ENCODE measurements at regions of chr21 and their contacts with region 1.

Region 1: GRCh38 chr21:25550352-25551120 is 56.7 kb downstream of the MRPL39 start:
- H3K4me3 Mint-ChIP-seq: no peak overlapping the region
- H3K27ac Mint-ChIP-seq: no peak overlapping the region
- H3K4me1 Mint-ChIP-seq: peaks cover 23% of the 10 kb centered on the region
- H3K27me3 Mint-ChIP-seq: no peaks in the 10 kb centered on the region

Region 2: GRCh38 chr21:25133939-25134338 is 416.6 kb before region 1 on chr21:
- intact Hi-C with region 1: no loop called
- H3K4me3 Mint-ChIP-seq: no peak overlapping the region
- H3K27ac Mint-ChIP-seq: no peak overlapping the region
- H3K4me1 Mint-ChIP-seq: no peaks in the 10 kb centered on the region
- H3K27me3 Mint-ChIP-seq: no peaks in the 10 kb centered on the region

Region 3: GRCh38 chr21:25501996-25502665 is 48.4 kb before region 1 on chr21:
- intact Hi-C with region 1: loop called (anchors 5 kb)
- H3K4me3 Mint-ChIP-seq: no peak overlapping the region
- H3K27ac Mint-ChIP-seq: peak overlapping the region; percentile 32
- H3K4me1 Mint-ChIP-seq: peaks cover 17% of the 10 kb centered on the region
- H3K27me3 Mint-ChIP-seq: peaks cover 24% of the 10 kb centered on the region

Region 4: GRCh38 chr21:25561668-25562641 is 11.4 kb after region 1 on chr21:
- intact Hi-C with region 1: no loop called
- H3K4me3 Mint-ChIP-seq: peak overlapping the region; percentile 85
- H3K27ac Mint-ChIP-seq: peak overlapping the region; percentile 88
- H3K4me1 Mint-ChIP-seq: peaks cover 39% of the 10 kb centered on the region
- H3K27me3 Mint-ChIP-seq: peaks cover 2% of the 10 kb centered on the region

Region 5: DNA sequence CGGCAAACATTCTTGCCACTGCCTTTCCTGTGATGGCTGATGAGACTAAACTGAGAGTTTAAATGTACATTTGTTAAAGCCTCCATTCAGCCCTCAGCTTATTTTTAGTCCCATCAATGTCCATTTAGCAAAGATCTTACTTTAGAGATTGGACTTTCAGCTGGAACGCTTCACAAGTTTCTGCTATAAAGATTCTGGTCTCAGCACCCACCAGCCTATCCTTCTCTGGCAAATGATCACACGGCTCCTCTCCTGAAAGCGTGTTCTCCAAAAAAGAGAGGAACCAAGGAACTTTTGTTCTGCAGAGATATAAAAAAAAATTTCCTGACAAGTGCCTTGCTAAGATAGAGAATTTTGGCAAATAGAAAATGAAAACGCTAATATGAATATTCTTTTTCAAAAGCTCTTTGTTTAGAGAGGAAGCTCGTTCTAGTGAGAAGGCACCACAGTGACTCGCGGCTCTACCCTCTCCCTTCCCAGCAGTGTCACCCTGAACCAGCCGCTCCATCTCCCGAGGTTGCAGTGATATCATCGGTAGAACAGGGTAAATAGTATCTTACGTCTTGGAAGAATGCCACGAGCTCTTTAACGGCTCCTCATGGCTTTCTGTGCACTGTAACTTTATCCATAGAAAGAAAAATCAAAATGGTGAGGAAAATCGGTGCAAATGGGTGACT is 419.9 kb after region 1 on chr21:
- intact Hi-C with region 1: no loop called
- H3K4me3 Mint-ChIP-seq: no peak overlapping the region
- H3K27ac Mint-ChIP-seq: peak overlapping the region; percentile 43
- H3K4me1 Mint-ChIP-seq: peaks cover 28% of the 10 kb centered on the region
- H3K27me3 Mint-ChIP-seq: no peaks in the 10 kb centered on the region